Adrenal gland (tissue), 19 donors: ENCODE measurements at regions of chr10 and their contacts with region 1.

Region 1: GRCh38 chr10:7671121-7671520 is 4.4 kb upstream of the ITIH5 start:
- DNase-seq: no peak
- H3K4me3 ChIP-seq: no peak overlapping the region
- H3K27ac ChIP-seq: no peak overlapping the region
- H3K4me1 ChIP-seq: peaks cover 6 to 7% of the 10 kb centered on the region in 2 donors
- H3K27me3 ChIP-seq: peaks cover 4% of the 10 kb centered on the region
- CTCF ChIP-seq: no peak
- POLR2A ChIP-seq: no peak

Region 2: DNA sequence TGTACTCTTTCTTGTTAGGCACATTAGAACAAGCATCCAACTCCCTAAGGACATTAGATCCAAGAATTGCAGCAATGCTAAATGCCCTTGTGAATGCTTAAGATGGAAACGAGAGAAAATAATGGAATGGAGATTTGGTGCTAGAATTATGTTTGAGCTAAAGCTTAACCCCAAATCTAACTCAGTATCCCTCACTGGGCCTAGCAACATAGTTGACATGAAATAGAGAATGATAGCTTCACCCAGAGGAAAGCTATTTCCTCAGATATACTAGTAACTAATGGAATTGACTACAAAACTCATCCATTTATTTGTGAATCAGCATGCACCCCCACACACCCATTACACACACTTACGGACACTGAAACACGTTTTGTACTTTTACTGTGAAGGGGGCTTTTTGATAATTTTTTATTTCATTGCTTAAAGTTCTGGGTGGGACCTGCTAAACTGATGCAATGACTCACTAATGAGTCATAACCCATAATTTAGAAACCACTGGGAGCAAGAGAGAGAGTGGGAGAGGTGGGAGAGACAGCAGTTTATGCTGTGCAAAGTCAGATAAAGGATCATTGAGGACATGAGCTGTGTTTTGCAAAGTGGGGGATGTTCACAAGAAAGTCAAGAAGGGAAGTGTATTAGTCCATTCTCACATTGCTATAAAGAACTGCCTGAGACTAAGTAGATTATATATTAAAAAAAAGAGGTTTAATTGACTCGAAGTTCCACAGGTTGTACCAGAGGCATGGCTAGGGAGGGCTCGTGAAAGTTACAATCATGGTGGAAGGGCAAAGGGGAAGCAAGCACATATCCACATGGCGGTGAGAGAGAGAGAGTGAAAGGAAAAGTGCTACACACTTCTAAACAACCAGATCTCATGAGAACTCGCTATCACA is 643.0 kb before region 1 on chr10:
- intact Hi-C with region 1: loop called in 1 of 2 experiments (anchors 5 kb)
- DNase-seq: no peak
- H3K4me3 ChIP-seq: no peak overlapping the region
- H3K27ac ChIP-seq: no peak overlapping the region
- H3K4me1 ChIP-seq: no peaks in the 10 kb centered on the region
- H3K27me3 ChIP-seq: no peaks in the 10 kb centered on the region
- CTCF ChIP-seq: no peak
- POLR2A ChIP-seq: no peak